ENCODE measurements at regions of chr10 and their contacts with region 1.

Region 1: DNA sequence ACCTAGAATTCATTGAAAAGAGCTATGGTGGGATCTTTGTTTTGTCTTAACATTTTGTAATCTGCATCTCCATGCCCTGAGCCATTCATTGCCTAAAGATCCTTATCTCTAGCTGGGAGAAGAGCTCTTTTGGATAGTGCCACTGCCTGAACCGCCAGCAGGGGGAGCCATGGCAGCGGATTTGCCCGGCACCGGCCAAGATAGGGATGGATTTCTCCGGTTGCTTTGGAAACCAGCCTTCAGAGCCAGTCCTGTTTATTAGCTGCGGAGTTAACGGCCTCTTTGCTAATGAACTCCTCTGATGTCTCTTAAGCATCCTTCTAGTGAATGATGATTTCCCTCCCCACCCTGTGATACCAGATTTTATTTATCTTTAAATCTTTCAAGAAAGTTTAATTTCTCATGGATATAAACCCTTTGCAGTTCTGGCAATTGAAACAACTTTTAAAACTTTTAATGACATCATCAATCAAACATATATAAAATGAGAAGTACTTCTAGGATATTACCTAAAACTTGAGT is 58.2 kb upstream of the LYZL2 start:
- DNase-seq: peak; percentile 88
- ATAC-seq: peak; percentile 78
- H3K4me3 Mint-ChIP-seq: no peak overlapping the region
- H3K27ac Mint-ChIP-seq: peak overlapping the region; percentile 69
- H3K4me1 Mint-ChIP-seq: peaks cover 63% of the 10 kb centered on the region
- H3K27me3 Mint-ChIP-seq: no peaks in the 10 kb centered on the region

Region 2: DNA sequence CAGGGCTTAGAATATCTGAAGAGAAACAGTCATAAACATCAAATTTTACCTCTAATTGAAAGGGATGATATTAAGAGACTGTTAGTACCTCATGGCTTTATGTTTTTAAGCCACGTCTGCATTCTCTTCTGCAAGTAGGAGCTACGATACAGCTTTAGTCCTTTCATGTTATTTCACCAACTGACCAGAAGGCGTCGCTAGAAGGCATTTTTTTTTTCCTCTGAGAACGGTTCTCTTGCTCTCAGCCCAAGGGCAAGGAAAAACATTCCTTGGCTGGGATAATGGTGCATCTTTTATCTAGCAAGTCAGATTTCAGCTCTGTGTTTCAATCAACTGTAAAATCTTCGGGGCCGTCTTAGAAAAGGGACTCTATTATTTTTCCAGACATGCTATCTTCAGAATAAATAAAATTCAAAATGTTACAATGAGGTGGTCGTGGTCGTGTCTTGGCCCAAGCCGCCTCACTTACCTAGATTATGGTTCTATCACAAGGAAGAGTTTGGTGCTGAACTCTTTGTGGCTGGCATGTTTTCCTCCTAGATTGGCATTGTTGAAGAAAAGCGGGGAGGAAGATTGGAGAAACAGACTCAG is 16.6 kb before region 1 on chr10:
- CTCF ChIA-PET with region 1: interaction called, 38 read pairs
- DNase-seq: no peak
- ATAC-seq: peak; percentile 76
- H3K4me3 Mint-ChIP-seq: peak overlapping the region; percentile 58
- H3K27ac Mint-ChIP-seq: no peak overlapping the region
- H3K4me1 Mint-ChIP-seq: peaks cover 26% of the 10 kb centered on the region
- H3K27me3 Mint-ChIP-seq: peaks cover 9% of the 10 kb centered on the region

Region 3: GRCh38 chr10:30701451-30702173 is 13.9 kb after region 1 on chr10:
- CTCF ChIA-PET with region 1: interaction called, 76 read pairs
- DNase-seq: peak; percentile 93
- ATAC-seq: peak; percentile 72
- H3K4me3 Mint-ChIP-seq: peak overlapping the region; percentile 84
- H3K27ac Mint-ChIP-seq: peak overlapping the region; percentile 99
- H3K4me1 Mint-ChIP-seq: peaks cover 82% of the 10 kb centered on the region
- H3K27me3 Mint-ChIP-seq: no peaks in the 10 kb centered on the region

Region 4: DNA sequence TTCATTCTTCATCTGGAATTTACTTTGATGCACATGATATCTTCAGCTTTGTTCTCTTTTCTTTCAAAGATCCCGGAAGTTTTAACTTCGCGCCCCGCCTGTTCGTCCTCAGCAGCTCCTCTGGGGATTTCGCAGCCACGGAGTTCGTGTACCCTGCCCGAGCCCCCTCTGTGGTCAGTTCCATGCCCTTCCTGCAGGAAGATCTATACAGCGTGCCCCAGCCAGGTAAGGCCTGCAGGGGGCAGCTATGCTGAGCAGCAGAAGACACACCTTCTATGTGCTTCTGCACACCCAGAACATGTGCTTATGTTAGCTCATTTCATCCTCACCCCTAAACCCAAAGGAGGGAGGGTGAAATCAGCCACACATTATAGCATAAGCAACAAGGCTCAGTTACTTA is 21.5 kb after region 1 on chr10:
- CTCF ChIA-PET with region 1: interaction called, 76 read pairs
- DNase-seq: no peak
- ATAC-seq: no peak
- H3K4me3 Mint-ChIP-seq: no peak overlapping the region
- H3K27ac Mint-ChIP-seq: no peak overlapping the region
- H3K4me1 Mint-ChIP-seq: peaks cover 29% of the 10 kb centered on the region
- H3K27me3 Mint-ChIP-seq: no peaks in the 10 kb centered on the region

Region 5: DNA sequence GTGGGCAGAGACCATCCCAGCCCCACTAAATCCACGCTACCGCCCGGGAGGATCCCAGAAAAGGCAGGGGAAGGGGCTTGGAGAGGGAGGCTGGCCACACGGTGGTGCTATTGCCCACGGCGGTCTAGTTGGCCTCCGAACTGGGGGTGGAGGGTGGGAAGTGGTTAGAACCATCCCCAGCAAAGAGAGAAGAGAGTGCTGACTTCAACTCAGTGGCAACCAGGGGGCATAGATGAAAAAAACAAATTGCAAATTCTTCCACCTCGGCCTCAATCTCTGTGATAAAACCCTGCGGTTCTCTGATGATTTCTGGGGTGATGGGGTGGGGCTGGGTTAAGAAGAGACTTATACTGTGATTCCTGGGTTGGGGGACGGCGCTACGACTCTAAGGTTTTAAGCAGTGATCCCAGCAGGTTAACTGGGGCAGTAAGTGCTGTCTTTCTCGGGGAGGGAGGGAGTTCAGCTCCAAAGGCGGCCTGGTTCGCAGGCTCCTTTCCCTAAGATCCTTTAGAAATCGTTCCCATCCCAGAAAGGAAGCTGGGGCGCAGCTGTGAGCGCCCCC is 96.3 kb after region 1 on chr10:
- CTCF ChIA-PET with region 1: interaction called, 12 read pairs
- DNase-seq: peak; percentile 90
- ATAC-seq: peak; percentile 84
- H3K4me3 Mint-ChIP-seq: peak overlapping the region; percentile 72
- H3K27ac Mint-ChIP-seq: peak overlapping the region; percentile 84
- H3K4me1 Mint-ChIP-seq: peaks cover 27% of the 10 kb centered on the region
- H3K27me3 Mint-ChIP-seq: peaks cover 3% of the 10 kb centered on the region

Measured in activated CD8-positive, alpha-beta memory T cell treated with anti-CD3 and anti-CD28 coated beads, Interleukin-2, amount 10 ng/mL, durations not matched to agents 7 days and 5 days (primary cell).